A549 (cell line): ENCODE measurements at regions of chr22 and their contacts with region 1.

Region 1: DNA sequence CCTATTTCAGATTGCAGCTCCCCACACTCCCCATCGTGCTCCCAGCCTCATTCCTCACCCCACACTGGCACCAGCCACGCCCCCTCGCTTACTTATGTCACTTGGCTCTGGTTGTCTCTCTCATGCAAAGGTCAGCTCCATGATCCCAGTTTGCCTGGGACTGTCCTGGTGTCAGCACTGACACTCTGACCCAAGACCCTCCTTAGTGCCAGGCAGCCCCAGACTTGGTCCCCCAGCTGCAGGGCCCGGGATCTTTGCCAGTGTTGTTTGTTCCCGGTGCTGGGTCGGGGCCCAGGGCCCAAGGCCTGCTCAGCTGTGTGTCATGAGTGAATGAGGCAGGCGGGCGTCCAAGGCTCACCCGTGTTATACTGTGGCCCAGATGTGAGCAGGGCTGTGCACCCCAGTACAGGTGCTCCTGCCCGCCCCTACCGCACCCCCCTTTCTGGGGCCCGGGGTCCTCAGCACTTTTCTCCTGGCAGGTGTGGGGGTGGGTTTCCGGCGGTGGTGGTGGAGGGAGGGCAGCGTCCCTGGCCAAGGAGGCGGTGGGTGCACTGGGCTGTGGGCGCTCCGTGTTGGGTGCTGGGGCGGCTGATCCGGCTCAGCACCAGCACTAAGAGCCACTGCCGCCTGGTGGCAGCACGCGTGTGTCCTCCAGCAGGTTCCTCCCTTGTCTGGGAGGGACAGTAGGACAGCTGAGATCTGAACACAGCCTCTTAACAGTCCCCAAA is 19.5 kb downstream of the IL17REL start:
- DNase-seq: peak; percentile 44 to 65
- ATAC-seq: peak; percentile 92 to 96
- H3K4me3 ChIP-seq: no peak overlapping the region
- H3K27ac ChIP-seq: peak overlapping the region; percentile 52 to 74; a peak in 5 of 6 replicates
- H3K4me1 ChIP-seq: no peaks in the 10 kb centered on the region
- CTCF ChIP-seq: peak; percentile 60
- EP300 ChIP-seq: no peak
- POLR2A ChIP-seq: no peak
- RAD21 ChIP-seq: peak; percentile 50 to 66; a peak in 4 of 5 replicates

Region 2: DNA sequence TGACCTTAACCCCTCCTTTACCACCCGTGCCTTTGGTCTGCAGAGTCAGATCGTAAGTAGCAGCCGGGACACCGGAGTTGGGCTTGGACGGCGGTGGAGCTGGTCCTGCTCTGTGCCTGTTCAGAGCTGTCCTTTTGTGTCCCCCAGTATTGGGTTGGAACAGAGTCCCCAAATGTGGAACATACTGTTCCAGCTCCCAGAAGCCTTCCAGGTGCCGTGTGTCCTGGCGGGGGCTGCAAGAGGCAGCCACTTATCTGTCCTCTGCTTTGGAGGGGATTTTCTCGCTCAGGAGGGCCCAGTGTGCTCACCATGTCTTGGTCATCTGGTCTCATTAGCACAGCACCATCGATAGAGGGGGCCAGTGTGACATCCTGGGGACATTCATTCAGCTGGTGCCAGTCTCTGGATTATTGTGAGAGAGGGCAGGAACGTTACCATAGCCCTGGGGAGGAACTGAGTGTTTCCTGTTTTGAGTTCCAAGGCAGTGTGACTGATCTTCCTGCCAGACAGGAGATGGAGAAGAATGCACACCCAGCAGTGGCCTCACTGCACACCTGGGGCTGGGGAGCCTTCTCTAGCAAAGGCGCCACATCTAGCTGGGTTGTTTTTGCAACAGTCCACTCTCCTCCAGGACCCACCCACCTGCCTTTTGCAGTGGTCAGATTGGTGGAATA is 62.2 kb before region 1 on chr22:
- CTCF ChIA-PET with region 1: interaction called, 30 read pairs
- POLR2A ChIA-PET with region 1: no interaction called
- DNase-seq: peak in 1 of 2 experiments; percentile 77
- ATAC-seq: peak; percentile 60 to 67
- H3K4me3 ChIP-seq: no peak overlapping the region
- H3K27ac ChIP-seq: no peak overlapping the region
- H3K4me1 ChIP-seq: peaks cover 20% of the 10 kb centered on the region
- CTCF ChIP-seq: peak; percentile 37; the same call in 2 of the 3 replicates
- EP300 ChIP-seq: no peak
- POLR2A ChIP-seq: no peak
- RAD21 ChIP-seq: peak; percentile 46 to 76

Region 3: DNA sequence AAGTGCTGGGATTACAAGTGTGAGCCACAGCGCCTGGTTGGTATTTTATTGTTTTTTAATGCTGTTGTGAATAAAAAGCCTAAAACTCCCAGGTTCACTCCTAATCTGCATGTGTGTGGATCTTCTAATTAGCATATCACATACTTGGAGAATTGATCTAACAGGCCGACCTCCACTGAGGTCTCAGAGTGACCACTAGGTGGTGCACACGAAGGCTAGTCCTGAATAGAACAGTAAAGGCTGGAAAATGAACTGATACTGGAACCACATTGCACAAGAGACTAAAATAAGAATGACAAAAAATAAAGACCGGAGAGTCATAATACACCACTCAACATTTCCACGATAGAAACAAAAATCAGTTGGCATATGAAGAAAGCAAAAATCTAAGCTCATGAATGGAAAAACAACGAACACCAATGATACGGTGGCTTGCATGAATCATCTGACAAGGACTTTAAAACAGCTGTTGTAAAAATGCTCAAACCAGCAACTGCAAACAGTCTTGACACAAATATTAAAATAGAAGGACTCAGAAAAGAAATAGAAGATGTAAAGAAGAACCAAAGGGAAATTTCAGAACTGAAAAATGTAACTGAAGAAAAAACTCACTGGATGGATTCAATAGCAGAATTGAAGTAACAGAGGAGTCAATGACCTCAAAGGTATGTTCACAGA is 13.4 kb before region 1 on chr22:
- CTCF ChIA-PET with region 1: interaction called, 13 read pairs
- POLR2A ChIA-PET with region 1: no interaction called
- DNase-seq: peak; percentile 33 to 58
- ATAC-seq: peak in 1 of 2 experiments; percentile 68; a peak in 3 of 6 replicates
- H3K4me3 ChIP-seq: no peak overlapping the region
- H3K27ac ChIP-seq: no peak overlapping the region
- H3K4me1 ChIP-seq: peaks cover 9% of the 10 kb centered on the region; the same call in 2 of the 3 replicates
- CTCF ChIP-seq: peak; percentile 16; the same call in 1 of the 3 replicates
- EP300 ChIP-seq: no peak
- POLR2A ChIP-seq: no peak
- RAD21 ChIP-seq: no peak